ENCODE measurements at regions of chr2 and their contacts with region 1.

Region 1: GRCh38 chr2:73828818-73829570 is at the start of gene STAMBP:
- DNase-seq: peak; percentile 95
- ATAC-seq: peak; percentile 75
- H3K4me3 Mint-ChIP-seq: peak within 1 kb of the TSS; percentile 80
- H3K27ac Mint-ChIP-seq: peak within 1 kb of the TSS; percentile 95
- H3K4me1 Mint-ChIP-seq: peaks cover 43% of the 10 kb centered on the region
- H3K27me3 Mint-ChIP-seq: no peaks in the 10 kb centered on the region
- CTCF ChIP-seq: no peak
- total RNA-seq, gene STAMBP: 76.9 to 87.1 TPM

Region 2: GRCh38 chr2:73385595-73386341 is 443.2 kb before region 1 on chr2 and contains the start of gene ALMS1:
- CTCF ChIA-PET with region 1: no interaction called
- POLR2A ChIA-PET with region 1: no interaction called
- intact Hi-C with region 1: no loop called
- DNase-seq: peak; percentile 92
- ATAC-seq: peak; percentile 85
- H3K4me3 Mint-ChIP-seq: peak within 1 kb of the TSS; percentile 89
- H3K27ac Mint-ChIP-seq: peak within 1 kb of the TSS; percentile 87
- H3K4me1 Mint-ChIP-seq: peaks cover 20% of the 10 kb centered on the region
- H3K27me3 Mint-ChIP-seq: no peaks in the 10 kb centered on the region
- CTCF ChIP-seq: no peak
- total RNA-seq, gene ALMS1: 18.1 to 20.3 TPM

Region 3: DNA sequence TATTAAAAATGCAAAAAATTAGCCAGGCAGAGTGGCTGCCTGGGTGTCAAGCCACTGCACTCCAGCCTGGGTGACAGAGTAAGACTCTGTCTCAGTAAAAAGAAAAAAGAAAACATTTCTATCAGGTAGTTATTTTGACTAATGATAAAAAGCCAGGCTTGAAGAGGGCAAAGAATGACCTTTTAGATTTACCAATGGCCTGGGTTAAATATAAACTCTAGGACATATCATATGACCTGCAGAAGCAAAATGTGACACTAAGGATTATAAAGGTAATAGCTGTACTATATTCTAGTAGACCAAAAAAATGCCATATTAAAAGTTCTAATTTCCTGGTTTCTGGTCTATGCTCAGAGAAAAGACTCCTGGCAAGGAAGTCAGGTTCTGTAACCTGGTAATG is 16.4 kb before region 1 on chr2:
- CTCF ChIA-PET with region 1: interaction called, 18 read pairs
- POLR2A ChIA-PET with region 1: interaction called, 3 read pairs
- intact Hi-C with region 1: no loop called
- DNase-seq: no peak
- ATAC-seq: no peak
- H3K4me3 Mint-ChIP-seq: no peak overlapping the region
- H3K27ac Mint-ChIP-seq: no peak overlapping the region
- H3K4me1 Mint-ChIP-seq: no peaks in the 10 kb centered on the region
- H3K27me3 Mint-ChIP-seq: no peaks in the 10 kb centered on the region
- CTCF ChIP-seq: no peak

Region 4: DNA sequence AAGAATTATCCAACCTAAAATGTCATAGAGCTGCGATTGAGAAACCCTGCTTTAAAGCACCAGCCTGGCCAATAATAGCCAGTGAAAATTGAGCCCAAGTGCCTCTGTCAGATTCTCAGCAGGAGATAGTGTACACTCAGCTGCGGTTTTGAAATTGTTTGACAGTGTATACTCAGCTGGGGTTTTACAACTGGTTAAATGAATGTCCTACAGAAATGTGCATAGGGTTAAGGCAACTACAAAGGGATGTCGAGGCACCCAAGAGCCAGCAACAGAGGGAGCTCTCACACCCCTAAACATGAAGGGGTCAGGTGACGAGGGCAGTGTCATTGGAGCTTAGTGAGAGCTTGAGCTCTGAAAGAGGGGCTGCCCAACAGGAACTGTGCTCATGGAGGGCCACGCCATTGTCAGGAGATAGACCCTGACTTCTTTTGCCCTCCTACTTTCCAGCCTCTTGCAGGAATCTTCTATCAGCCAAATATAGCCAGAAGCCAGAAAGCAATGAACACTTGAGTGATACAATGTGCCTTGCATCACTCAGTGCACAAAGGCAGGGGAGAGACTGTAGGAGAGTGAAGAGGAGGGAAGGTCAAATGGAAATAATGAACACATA is 79.0 kb after region 1 on chr2:
- CTCF ChIA-PET with region 1: interaction called, 10 read pairs
- POLR2A ChIA-PET with region 1: no interaction called
- intact Hi-C with region 1: no loop called
- DNase-seq: peak; percentile 84
- ATAC-seq: peak; percentile 95
- H3K4me3 Mint-ChIP-seq: no peak overlapping the region
- H3K27ac Mint-ChIP-seq: peak overlapping the region; percentile 75
- H3K4me1 Mint-ChIP-seq: peaks cover 10% of the 10 kb centered on the region
- H3K27me3 Mint-ChIP-seq: no peaks in the 10 kb centered on the region
- CTCF ChIP-seq: peak; percentile 48

Region 5: DNA sequence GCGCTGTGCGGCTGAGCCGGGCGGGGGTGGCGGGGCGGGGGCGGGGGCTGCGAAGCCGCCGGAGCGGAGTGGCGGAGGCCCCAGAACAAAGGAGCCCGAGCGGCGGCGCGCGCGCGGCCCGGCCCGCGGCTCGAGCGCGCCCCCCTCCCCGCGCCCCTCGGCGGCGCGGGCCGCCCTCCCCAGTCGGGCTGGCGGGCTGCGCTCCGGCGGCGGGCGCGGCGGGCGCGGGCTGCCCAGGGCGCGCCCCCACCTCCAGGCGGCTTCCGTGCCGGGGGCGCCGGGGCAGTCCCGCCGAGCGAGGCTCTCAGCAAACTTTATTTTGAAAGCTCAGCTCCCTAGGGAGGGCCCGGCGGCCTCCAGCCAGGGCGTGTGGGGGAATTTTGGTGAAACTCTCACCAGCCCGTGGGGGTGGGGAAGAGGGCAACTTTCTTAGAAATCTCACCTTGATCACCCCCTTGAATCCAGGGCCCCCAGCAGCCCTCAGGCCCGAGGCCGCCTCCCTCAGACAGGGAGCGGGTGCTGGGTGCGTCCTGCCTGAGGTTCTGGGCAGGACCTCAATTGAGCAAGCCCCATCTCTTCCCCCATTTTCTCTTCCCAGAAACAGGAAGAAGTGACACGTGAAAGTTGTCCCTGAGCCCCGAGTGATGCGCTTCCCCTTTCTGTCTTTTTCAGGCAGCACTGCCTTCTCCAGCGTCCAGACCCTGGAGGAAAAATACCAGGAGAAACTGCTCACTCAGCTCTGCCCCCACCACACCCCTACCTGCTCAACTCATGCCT is 156.5 kb after region 1 on chr2:
- CTCF ChIA-PET with region 1: interaction called, 6 read pairs
- POLR2A ChIA-PET with region 1: interaction called, 8 read pairs
- intact Hi-C with region 1: loop called (anchors 5 kb)
- DNase-seq: peak; percentile 91
- ATAC-seq: peak; percentile 52
- H3K4me3 Mint-ChIP-seq: peak overlapping the region; percentile 87
- H3K27ac Mint-ChIP-seq: peak overlapping the region; percentile 95
- H3K4me1 Mint-ChIP-seq: peaks cover 60% of the 10 kb centered on the region
- H3K27me3 Mint-ChIP-seq: no peaks in the 10 kb centered on the region
- CTCF ChIP-seq: no peak

Region 6: DNA sequence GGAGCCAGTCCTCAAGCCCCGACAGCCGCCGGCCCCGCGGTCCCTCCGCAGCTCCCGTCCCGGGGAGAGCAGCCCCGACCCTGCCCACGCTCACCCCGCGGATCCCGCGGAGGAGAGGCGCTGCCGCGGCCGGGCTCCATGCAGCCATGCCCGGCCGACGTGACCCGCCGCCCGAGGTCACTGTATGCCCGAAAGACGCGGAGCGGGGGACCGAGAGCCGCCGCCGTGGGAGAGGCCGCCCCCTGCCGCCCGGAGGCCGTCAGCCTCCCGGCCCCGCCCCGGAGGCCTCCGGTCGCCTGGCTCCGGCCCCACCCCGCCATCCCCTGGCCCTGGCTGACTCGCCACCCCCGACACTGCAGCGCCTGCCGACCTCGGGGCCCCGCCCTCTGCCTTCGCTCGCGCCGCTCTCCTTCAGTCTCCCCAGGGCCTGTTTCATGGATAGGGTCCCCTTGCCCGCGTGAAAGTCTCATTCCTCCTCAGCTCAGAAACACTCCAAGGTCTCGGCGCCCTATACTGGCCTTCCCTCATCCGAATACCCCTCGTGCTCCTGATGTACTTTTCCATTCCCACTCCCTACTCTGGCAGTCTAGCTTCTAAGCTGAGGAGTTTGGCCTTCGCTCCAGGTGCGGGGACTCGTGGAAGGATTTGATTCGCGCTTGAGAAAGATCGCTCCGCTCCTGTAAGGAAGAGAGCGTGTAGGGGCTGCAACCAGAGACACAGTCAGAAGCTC is 318.9 kb after region 1 on chr2 and contains the start of gene BOLA3:
- CTCF ChIA-PET with region 1: interaction called, 56 read pairs
- POLR2A ChIA-PET with region 1: interaction called, 3 read pairs
- intact Hi-C with region 1: no loop called
- DNase-seq: peak; percentile 90
- ATAC-seq: peak; percentile 96
- H3K4me3 Mint-ChIP-seq: no peak within 1 kb of the TSS
- H3K27ac Mint-ChIP-seq: no peak within 1 kb of the TSS
- H3K4me1 Mint-ChIP-seq: peaks cover 4% of the 10 kb centered on the region
- H3K27me3 Mint-ChIP-seq: no peaks in the 10 kb centered on the region
- CTCF ChIP-seq: peak; percentile 71
- total RNA-seq, gene BOLA3: 131 to 135 TPM

Region 7: DNA sequence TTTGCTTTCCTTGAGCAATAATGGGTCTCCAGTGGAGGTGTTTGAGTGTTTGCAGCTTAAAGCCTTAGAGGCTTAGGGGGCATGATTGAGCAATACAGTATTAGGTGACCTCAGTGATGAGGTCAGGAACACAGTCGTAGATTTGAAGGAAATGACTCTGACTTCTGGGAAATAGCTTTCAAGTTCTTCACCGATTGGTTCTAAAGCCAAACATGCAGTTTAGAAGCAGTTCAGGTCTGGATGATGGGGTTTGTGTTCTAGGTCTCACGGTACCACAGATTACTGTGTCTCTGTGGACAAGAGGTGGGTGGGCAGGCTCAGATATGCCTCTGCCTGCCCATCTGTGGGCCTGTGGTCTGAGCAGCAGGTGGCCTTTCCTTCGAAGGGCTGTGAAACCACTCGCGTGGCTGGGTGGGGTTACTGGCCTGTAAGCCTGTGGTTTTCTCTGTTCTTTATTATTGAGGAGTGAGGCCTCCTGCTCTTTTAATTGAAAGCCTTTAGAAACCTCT is 377.2 kb after region 1 on chr2:
- CTCF ChIA-PET with region 1: interaction called, 12 read pairs
- POLR2A ChIA-PET with region 1: interaction called, 4 read pairs
- intact Hi-C with region 1: no loop called
- DNase-seq: peak; percentile 80
- ATAC-seq: peak; percentile 91
- H3K4me3 Mint-ChIP-seq: peak overlapping the region; percentile 67
- H3K27ac Mint-ChIP-seq: peak overlapping the region; percentile 97
- H3K4me1 Mint-ChIP-seq: peaks cover 59% of the 10 kb centered on the region
- H3K27me3 Mint-ChIP-seq: no peaks in the 10 kb centered on the region
- CTCF ChIP-seq: no peak